Naive thymus-derived CD4-positive, alpha-beta T cell (primary cell): ENCODE measurements at regions of chr13 and their contacts with region 1.

Region 1: DNA sequence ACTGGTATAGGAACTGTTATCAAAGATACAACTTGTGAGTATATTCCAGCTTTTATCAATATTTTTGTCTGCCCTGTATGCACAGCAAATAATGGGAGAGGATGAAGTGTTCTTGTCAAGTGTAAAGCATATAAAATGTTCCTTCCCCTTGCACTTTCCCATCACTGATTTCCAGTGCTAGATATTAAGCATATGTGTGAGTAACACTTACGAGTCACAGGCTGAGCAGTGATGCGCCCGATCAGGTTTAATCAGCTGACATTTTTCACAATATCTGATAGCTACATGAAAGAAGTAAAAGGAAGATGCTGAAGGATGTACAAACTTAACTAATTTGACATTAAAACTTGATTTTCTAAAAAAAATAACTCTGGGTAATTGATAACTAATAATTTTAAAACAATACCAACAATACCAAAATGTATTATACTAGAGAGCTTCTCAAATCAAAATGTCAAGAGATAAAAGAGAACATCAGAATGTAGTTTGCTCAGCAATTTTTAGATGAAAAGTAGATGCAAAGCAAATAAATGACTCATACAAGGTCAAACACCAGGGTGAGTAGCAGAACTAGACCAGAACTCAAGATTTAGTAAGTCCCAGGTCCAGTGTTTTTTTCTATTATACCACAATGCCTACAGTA is 56.4 kb downstream of the ZDHHC20 start:
- DNase-seq: no peak
- ATAC-seq: no peak
- H3K4me3 ChIP-seq: no peak overlapping the region
- H3K4me3 Mint-ChIP-seq: no peak overlapping the region
- H3K27ac ChIP-seq: no peak overlapping the region
- H3K27ac Mint-ChIP-seq: peak overlapping the region in 8 of 9 donors; percentile 1 to 78 (median 56)
- H3K4me1 ChIP-seq: peaks cover 6 to 13% of the 10 kb centered on the region in 2 donors
- H3K4me1 Mint-ChIP-seq: peaks cover 19 to 56% (median 47%) of the 10 kb centered on the region in 7 donors
- H3K27me3 ChIP-seq: no peaks in the 10 kb centered on the region
- H3K27me3 Mint-ChIP-seq: no peaks in the 10 kb centered on the region

Region 2: DNA sequence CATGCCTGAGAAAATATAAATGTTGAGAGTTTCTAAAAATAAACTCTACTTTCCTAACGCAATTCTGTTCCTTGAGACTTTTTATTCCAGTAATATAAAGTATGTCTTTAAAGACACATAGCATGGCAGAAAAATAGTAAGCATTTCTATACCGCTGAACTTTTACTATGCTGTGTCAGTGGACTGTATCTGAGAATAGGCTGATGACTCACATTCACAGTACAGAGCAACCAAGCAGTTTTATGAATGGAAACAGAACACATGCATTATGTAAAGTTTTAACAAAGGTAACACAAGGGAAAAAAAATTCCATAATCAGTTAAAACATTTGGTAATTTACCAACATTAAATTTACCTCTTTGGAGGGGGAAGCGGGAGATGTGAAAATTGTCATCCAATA is 18.0 kb after region 1 on chr13:
- CTCF ChIA-PET with region 1: interaction called, 4 read pairs
- POLR2A ChIA-PET with region 1: no interaction called
- intact Hi-C with region 1: loop called in 1 of 2 experiments (anchors 2 kb)
- DNase-seq: no peak
- ATAC-seq: no peak
- H3K4me3 ChIP-seq: no peak overlapping the region
- H3K4me3 Mint-ChIP-seq: no peak overlapping the region
- H3K27ac ChIP-seq: no peak overlapping the region
- H3K27ac Mint-ChIP-seq: peak overlapping the region in 1 of 9 donors; percentile 41
- H3K4me1 ChIP-seq: no peaks in the 10 kb centered on the region
- H3K4me1 Mint-ChIP-seq: peaks cover 2 to 25% (median 19%) of the 10 kb centered on the region in 7 donors
- H3K27me3 ChIP-seq: no peaks in the 10 kb centered on the region
- H3K27me3 Mint-ChIP-seq: no peaks in the 10 kb centered on the region

Region 3: DNA sequence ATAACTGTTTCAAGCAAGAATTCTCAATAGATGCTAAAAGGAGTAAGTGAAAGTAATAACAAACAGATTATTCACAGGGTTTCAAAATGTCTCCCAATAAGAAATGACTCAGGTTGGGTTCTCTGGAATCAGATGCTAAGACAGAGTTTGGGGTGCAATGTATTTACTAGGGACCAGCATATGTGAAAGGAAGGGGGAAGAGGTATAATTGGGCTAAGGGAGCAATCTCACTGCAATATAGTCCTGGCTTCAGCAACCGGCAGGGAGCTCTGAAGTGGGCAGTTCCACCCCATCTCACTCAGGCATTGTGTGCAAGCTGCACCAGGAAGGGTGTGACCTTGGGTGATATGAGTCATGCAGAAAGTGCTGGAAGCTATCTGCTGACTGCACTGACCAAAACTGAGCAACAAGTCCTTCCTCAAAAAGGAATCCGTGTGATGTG is 33.0 kb after region 1 on chr13:
- CTCF ChIA-PET with region 1: no interaction called
- POLR2A ChIA-PET with region 1: no interaction called
- intact Hi-C with region 1: loop called (anchors 5 kb)
- DNase-seq: peak in 1 of 9 donors; percentile 38
- ATAC-seq: peak; percentile 95
- H3K4me3 ChIP-seq: peak overlapping the region; percentile 11
- H3K4me3 Mint-ChIP-seq: peak overlapping the region in 5 of 10 donors; percentile 3 to 68 (median 18)
- H3K27ac ChIP-seq: no peak overlapping the region
- H3K27ac Mint-ChIP-seq: peak overlapping the region in 3 of 9 donors; percentile 25 to 86 (median 33)
- H3K4me1 ChIP-seq: peaks cover 9 to 21% of the 10 kb centered on the region in 2 donors
- H3K4me1 Mint-ChIP-seq: peaks cover 30 to 61% (median 54%) of the 10 kb centered on the region in 7 donors
- H3K27me3 ChIP-seq: no peaks in the 10 kb centered on the region
- H3K27me3 Mint-ChIP-seq: no peaks in the 10 kb centered on the region